ENCODE measurements at regions of chr17 and their contacts with region 1.

Region 1: DNA sequence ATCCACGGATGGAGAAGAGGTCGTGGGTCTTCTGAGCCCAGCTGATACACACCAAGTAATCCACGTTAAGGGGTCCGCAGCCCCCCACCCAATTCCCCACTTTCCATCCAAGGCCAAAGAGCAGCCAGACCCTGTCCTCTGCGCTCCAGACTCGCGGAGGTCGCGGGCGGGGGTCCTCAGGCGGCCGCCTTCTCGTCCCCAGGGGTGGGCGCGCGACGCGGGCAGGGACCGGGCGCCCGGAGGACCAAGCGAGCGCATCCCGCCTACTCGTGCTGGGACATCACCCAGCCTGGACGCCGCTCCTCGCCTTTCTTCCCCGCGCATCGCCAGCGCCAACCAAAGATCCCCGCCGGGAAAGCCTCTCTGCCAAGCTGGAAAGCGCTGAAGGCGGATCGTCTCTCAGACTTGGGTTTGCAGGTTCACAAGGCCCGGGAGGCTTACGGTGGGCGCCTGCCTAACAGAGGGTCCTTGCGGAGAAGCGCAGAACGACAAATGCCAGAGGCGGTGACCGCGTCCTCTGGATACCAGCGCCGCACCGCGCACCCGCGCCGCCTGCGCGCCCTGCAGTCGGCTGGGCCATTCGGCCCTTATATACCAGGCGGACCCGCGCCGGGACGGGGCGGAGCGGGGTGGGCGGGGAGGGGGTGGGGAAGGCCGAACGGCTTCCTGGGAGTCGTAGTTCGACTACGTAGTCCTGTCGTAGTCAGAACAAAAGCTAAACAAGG is 471.6 kb downstream of the SOX9 start:
- DNase-seq: peak; percentile 95
- ATAC-seq: peak; percentile 66
- H3K4me3 ChIP-seq: peak overlapping the region; percentile 95
- H3K27ac ChIP-seq: peak overlapping the region; percentile 91
- H3K4me1 ChIP-seq: peaks cover 22% of the 10 kb centered on the region
- H3K27me3 ChIP-seq: no peaks in the 10 kb centered on the region
- CTCF ChIP-seq: no peak

Region 2: GRCh38 chr17:72609501-72609900 is 17.1 kb after region 1 on chr17:
- CTCF ChIA-PET with region 1: no interaction called
- POLR2A ChIA-PET with region 1: interaction called, 3 read pairs
- intact Hi-C with region 1: loop called (anchors 1 kb)
- DNase-seq: peak; percentile 99
- ATAC-seq: peak; percentile 86
- H3K4me3 ChIP-seq: no peak overlapping the region
- H3K27ac ChIP-seq: peak overlapping the region; percentile 87
- H3K4me1 ChIP-seq: peaks cover 35% of the 10 kb centered on the region
- H3K27me3 ChIP-seq: no peaks in the 10 kb centered on the region
- CTCF ChIP-seq: no peak

Region 3: DNA sequence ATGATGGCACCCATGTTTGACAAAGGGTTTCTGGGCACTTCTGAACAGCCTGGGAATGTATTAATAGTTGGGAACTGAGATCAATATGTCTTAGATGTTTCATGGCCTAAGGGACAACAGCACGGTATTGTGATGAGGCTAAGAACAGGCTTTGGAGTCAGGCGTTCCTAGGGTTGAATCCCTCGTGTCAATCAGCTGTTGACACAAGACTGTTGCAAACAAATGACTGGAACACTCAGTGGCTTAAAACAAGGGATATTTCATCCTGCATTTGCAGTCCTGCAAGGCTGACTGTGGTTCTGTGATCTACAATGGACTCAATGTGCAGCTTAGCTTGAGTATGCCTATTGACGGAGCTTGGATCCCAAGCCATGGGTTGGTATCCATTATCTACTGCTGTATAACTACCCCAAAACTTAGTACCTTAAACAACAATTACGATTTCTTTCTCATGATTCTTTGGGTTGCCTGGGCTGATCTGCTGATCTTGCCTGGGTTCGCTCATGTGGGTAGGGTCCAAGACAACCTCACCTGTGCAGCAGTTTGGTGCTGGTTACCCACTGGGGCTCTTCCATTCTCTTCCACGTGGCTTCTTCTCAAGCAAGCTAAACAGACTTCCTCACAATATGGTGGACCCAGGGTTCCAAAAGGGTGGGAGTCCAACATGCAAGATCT is 27.7 kb after region 1 on chr17:
- CTCF ChIA-PET with region 1: no interaction called
- POLR2A ChIA-PET with region 1: no interaction called
- intact Hi-C with region 1: no loop called
- DNase-seq: no peak
- ATAC-seq: no peak
- H3K4me3 ChIP-seq: no peak overlapping the region
- H3K27ac ChIP-seq: no peak overlapping the region
- H3K4me1 ChIP-seq: peaks cover 24% of the 10 kb centered on the region
- H3K27me3 ChIP-seq: no peaks in the 10 kb centered on the region
- CTCF ChIP-seq: no peak

Region 4: GRCh38 chr17:72631949-72632684 is 39.7 kb after region 1 on chr17:
- CTCF ChIA-PET with region 1: no interaction called
- POLR2A ChIA-PET with region 1: no interaction called
- intact Hi-C with region 1: loop called (anchors 1 kb)
- DNase-seq: peak; percentile 85
- ATAC-seq: peak; percentile 80
- H3K4me3 ChIP-seq: peak overlapping the region; percentile 44
- H3K27ac ChIP-seq: peak overlapping the region; percentile 91
- H3K4me1 ChIP-seq: peaks cover 31% of the 10 kb centered on the region
- H3K27me3 ChIP-seq: no peaks in the 10 kb centered on the region
- CTCF ChIP-seq: no peak

Region 5: DNA sequence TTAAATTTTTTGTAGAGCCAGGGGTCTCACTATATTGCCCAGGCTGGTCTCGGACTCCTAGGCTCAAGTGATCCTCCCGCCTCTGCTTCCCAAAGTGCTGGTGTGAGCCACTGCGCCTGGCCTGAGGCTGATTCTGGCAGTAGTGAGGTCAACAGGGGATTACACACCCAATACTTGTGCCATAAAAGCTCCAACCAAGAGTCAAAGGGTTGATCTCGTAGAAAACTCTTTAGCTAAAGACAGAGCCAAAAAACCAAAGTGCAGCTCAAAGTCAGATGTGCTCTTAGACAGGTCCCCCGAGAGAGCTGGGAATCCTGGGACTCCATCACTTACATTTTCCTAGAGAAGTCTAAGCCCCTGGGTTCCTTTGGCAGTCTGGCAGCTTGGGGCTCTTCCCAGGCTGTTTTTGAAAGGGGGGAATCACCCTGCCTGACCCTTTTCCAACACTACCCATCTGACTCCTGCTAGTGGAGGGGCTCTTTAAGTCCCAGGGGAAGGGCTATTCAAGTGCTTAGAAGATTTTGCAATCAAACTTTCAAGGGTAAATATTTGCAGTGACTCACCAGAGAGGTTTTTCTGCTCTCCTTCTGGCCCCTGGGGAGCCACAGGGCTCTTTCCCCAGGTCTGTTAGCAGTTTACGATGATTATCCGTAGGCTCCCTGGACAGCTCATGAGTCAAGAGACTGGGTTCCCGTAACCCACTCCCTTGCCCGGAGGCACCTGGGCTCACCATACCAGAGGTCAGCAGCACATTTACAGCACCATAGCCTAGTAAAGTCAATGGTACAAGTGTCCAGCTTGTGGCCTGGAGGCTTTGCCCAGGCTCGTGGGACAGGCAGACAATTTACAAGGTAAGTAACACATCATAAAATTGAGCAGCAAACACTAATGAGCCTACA is 91.4 kb after region 1 on chr17:
- CTCF ChIA-PET with region 1: interaction called, 3 read pairs
- POLR2A ChIA-PET with region 1: interaction called, 5 read pairs
- intact Hi-C with region 1: loop called (anchors 1 kb)
- DNase-seq: peak; percentile 100
- ATAC-seq: peak; percentile 95
- H3K4me3 ChIP-seq: peak overlapping the region; percentile 38; the same call in 1 of the 2 replicates
- H3K27ac ChIP-seq: peak overlapping the region; percentile 97
- H3K4me1 ChIP-seq: peaks cover 44% of the 10 kb centered on the region
- H3K27me3 ChIP-seq: no peaks in the 10 kb centered on the region
- CTCF ChIP-seq: no peak

Region 6: GRCh38 chr17:72795946-72796345 is 203.5 kb after region 1 on chr17:
- CTCF ChIA-PET with region 1: no interaction called
- POLR2A ChIA-PET with region 1: no interaction called
- intact Hi-C with region 1: no loop called
- DNase-seq: no peak
- ATAC-seq: peak; percentile 56; the same call in 1 of the 2 replicates
- H3K4me3 ChIP-seq: no peak overlapping the region
- H3K27ac ChIP-seq: no peak overlapping the region
- H3K4me1 ChIP-seq: no peaks in the 10 kb centered on the region
- H3K27me3 ChIP-seq: no peaks in the 10 kb centered on the region
- CTCF ChIP-seq: no peak

Region 7: GRCh38 chr17:73311781-73312641 is 719.6 kb after region 1 on chr17 and contains the start of gene CDC42EP4:
- CTCF ChIA-PET with region 1: no interaction called
- POLR2A ChIA-PET with region 1: no interaction called
- intact Hi-C with region 1: loop called (anchors 10 kb)
- DNase-seq: peak; percentile 98
- ATAC-seq: peak; percentile 81
- H3K4me3 ChIP-seq: peak within 1 kb of the TSS; percentile 94
- H3K27ac ChIP-seq: peak within 1 kb of the TSS; percentile 82
- H3K4me1 ChIP-seq: peaks cover 35% of the 10 kb centered on the region
- H3K27me3 ChIP-seq: no peaks in the 10 kb centered on the region
- CTCF ChIP-seq: no peak
- total RNA-seq, gene CDC42EP4: 83.1 and 109 TPM in 2 replicates

Measured in PC-3 (cell line).